Activated CD4-positive, alpha-beta T cell treated with anti-CD3 and anti-CD28 coated beads for 36 hours (primary cell): ENCODE measurements at regions of chr5 and their contacts with region 1.

Region 1: GRCh38 chr5:161150441-161150988 is 298.5 kb upstream of the ATP10B start:
- DNase-seq: no peak
- ATAC-seq: no peak
- H3K4me3 Mint-ChIP-seq: no peak overlapping the region
- H3K27ac Mint-ChIP-seq: no peak overlapping the region
- H3K4me1 Mint-ChIP-seq: no peaks in the 10 kb centered on the region
- H3K27me3 Mint-ChIP-seq: no peaks in the 10 kb centered on the region

Region 2: GRCh38 chr5:161167016-161167767 is 16.7 kb after region 1 on chr5:
- CTCF ChIA-PET with region 1: no interaction called
- POLR2A ChIA-PET with region 1: no interaction called
- intact Hi-C with region 1: loop called in 1 of 2 experiments (anchors 1 kb)
- DNase-seq: no peak
- ATAC-seq: no peak
- H3K4me3 Mint-ChIP-seq: no peak overlapping the region
- H3K27ac Mint-ChIP-seq: no peak overlapping the region
- H3K4me1 Mint-ChIP-seq: no peaks in the 10 kb centered on the region
- H3K27me3 Mint-ChIP-seq: no peaks in the 10 kb centered on the region